ENCODE measurements at regions of chr15 and their contacts with region 1.

Region 1: GRCh38 chr15:58830556-58830955 is 59.5 kb downstream of the MINDY2 start:
- DNase-seq: no peak
- H3K4me3 ChIP-seq: no peak overlapping the region
- CTCF ChIP-seq: no peak

Region 2: DNA sequence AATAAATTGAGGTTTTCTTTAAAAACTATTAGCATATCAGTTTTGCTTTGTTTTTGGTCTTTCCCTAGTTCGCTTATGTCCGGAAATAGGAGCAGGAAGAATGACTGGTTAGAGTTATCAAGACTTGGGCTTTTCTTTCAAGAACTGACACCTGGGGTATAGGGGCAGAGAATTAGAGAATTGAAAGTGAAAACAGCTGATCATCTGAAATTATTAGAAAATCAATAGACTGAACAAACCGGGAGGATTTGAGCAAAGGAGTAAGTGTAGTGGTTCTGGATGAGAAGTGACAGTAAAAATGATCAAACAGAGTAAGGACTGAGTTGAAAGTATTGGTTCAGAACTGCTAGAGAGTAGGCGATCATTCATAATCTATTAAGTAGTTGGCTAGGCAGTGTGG is 53.4 kb before region 1 on chr15:
- in situ Hi-C with region 1: loop called (anchors 5 kb)
- DNase-seq: no peak
- H3K4me3 ChIP-seq: no peak overlapping the region
- CTCF ChIP-seq: no peak

Measured in astrocyte of the cerebellum (primary cell).